CD14-positive monocyte (primary cell): ENCODE measurements at regions of chr11 and their contacts with region 1.

Region 1: DNA sequence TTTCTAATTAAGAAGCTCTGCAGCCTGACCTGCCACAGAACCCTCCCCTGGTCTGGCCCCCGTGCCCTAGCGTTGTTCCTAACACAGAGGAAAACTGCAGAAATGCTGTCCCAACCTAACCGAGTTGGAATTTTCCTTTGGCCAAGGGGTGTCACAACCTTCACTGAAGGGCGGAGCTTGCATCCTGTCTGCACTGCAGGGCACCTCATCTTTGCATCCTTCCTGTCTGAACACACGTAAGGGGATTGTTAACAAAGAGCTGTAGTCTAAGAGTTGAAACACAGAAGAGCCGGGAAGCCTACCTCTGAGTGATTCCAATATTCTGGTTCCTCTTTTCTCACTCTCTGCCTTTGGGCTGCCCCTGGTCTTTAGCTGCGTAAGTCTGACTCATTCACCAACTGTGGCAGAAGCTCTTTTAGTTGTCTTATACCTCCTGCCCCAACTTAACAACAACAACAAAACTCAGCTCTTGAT is 1.6 kb downstream of the DIXDC1 start:
- DNase-seq: peak; percentile 74 to 91 (median 89)
- H3K4me3 ChIP-seq: peak overlapping the region in 1 of 3 experiments; percentile 88
- H3K4me3 Mint-ChIP-seq: peak overlapping the region; percentile 35 to 84
- H3K27ac ChIP-seq: peak overlapping the region in 1 of 2 donors; percentile 70
- H3K27ac Mint-ChIP-seq: peak overlapping the region; percentile 46 to 91 (median 70)
- H3K4me1 ChIP-seq: peaks cover 49 to 55% of the 10 kb centered on the region in 2 donors
- H3K4me1 Mint-ChIP-seq: peaks cover 49% of the 10 kb centered on the region
- H3K27me3 ChIP-seq: no peaks in the 10 kb centered on the region
- H3K27me3 Mint-ChIP-seq: peaks cover 0 to 4% (median 2%) of the 10 kb centered on the region in 3 donors
- CTCF ChIP-seq: no peak

Region 2: DNA sequence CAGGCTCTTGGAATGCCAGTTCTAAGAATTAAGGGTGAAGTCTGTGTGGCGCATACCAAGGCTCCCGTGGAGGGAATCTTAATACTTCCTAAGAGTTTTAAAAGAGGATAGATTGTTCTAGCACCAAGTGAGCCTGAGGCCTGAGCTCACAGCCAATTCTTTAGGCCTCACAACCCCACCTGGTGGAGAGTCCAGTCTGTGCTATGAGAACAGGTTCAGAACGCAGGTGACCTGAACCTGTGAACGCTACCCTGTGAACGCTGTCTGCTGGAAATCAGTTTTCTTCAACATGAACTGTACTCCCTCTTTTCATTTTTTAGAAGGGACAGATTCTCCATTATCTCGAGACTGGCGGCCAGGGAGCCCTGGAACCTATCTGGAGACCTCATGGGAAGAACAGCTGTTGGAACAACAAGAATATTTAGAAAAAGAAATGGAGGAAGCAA is 43.3 kb after region 1 on chr11:
- intact Hi-C with region 1: loop called in 1 of 2 experiments (anchors 5 kb)
- DNase-seq: peak in 1 of 3 donors; percentile 22
- H3K4me3 ChIP-seq: no peak overlapping the region
- H3K4me3 Mint-ChIP-seq: no peak overlapping the region
- H3K27ac ChIP-seq: no peak overlapping the region
- H3K27ac Mint-ChIP-seq: no peak overlapping the region
- H3K4me1 ChIP-seq: peaks cover 6 to 10% of the 10 kb centered on the region in 2 donors
- H3K4me1 Mint-ChIP-seq: peaks cover 10% of the 10 kb centered on the region
- H3K27me3 ChIP-seq: peaks cover 13 to 20% of the 10 kb centered on the region in 2 donors
- H3K27me3 Mint-ChIP-seq: peaks cover 21 to 27% (median 22%) of the 10 kb centered on the region in 3 donors
- CTCF ChIP-seq: peak; percentile 67

Region 3: GRCh38 chr11:112004389-112004788 is 65.7 kb after region 1 on chr11:
- intact Hi-C with region 1: no loop called
- DNase-seq: peak in 1 of 3 donors; percentile 18
- H3K4me3 ChIP-seq: no peak overlapping the region
- H3K4me3 Mint-ChIP-seq: no peak overlapping the region
- H3K27ac ChIP-seq: no peak overlapping the region
- H3K27ac Mint-ChIP-seq: peak overlapping the region in 1 of 7 donors; percentile 46
- H3K4me1 ChIP-seq: no peaks in the 10 kb centered on the region
- H3K4me1 Mint-ChIP-seq: no peaks in the 10 kb centered on the region
- H3K27me3 ChIP-seq: no peaks in the 10 kb centered on the region
- H3K27me3 Mint-ChIP-seq: peaks cover 0 to 2% (median 0%) of the 10 kb centered on the region in 3 donors
- CTCF ChIP-seq: peak; percentile 58

Region 4: DNA sequence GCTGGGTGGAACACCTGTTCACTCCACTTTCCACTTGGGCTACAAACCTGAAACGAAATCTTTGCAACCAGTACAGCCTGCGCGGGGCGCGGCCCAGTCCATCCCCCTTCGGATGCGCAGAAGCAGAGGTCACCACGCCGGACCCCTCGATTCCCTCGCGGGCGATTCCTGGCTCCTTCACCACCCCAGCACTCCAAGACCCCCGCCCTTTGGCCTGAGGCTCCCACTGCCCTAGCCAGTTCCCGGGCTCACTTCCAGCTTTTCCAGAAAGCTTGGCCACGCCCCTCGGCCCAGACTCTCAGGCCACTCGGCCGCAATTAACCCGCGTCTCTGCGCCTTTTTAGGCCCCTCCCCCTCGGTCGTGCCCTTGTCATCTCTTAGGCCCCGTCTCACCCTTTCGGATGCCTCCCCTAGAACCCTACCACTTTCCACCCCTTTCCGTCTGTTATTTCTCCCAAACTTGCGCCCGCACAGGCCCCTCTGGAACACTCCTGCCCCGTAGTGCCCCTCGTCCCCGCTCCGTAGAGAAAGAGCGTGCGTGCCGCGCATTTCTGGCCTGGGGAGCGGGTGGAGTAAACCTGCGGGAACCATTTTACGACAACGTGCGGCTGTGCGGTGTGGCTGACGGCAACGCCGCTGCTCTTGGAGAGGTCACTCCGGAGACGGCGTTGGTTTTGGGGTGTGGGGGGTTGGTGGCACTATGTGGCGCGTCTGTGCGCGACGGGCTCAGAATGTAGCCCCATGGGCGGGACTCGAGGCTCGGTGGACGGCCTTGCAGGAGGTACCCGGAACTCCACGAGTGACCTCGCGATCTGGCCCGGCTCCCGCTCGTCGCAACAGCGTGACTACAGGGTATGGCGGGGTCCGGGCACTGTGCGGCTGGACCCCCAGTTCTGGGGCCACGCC is 86.3 kb after region 1 on chr11 and contains the start of gene DLAT:
- intact Hi-C with region 1: loop called in 1 of 2 experiments (anchors 10 kb)
- DNase-seq: peak; percentile 71 to 78 (median 71)
- H3K4me3 ChIP-seq: peak within 1 kb of the TSS; percentile 78 to 91 (median 85)
- H3K4me3 Mint-ChIP-seq: peak within 1 kb of the TSS; percentile 99 to 100
- H3K27ac ChIP-seq: peak within 1 kb of the TSS; percentile 67 to 85
- H3K27ac Mint-ChIP-seq: peak within 1 kb of the TSS; percentile 92 to 99 (median 95)
- H3K4me1 ChIP-seq: peaks cover 13 to 19% of the 10 kb centered on the region in 2 donors
- H3K4me1 Mint-ChIP-seq: peaks cover 18% of the 10 kb centered on the region
- H3K27me3 ChIP-seq: no peaks in the 10 kb centered on the region
- H3K27me3 Mint-ChIP-seq: no peaks in the 10 kb centered on the region
- CTCF ChIP-seq: no peak
- polyA plus RNA-seq, gene DLAT: 5.8 to 14.6 (median 11.5) TPM

Region 5: DNA sequence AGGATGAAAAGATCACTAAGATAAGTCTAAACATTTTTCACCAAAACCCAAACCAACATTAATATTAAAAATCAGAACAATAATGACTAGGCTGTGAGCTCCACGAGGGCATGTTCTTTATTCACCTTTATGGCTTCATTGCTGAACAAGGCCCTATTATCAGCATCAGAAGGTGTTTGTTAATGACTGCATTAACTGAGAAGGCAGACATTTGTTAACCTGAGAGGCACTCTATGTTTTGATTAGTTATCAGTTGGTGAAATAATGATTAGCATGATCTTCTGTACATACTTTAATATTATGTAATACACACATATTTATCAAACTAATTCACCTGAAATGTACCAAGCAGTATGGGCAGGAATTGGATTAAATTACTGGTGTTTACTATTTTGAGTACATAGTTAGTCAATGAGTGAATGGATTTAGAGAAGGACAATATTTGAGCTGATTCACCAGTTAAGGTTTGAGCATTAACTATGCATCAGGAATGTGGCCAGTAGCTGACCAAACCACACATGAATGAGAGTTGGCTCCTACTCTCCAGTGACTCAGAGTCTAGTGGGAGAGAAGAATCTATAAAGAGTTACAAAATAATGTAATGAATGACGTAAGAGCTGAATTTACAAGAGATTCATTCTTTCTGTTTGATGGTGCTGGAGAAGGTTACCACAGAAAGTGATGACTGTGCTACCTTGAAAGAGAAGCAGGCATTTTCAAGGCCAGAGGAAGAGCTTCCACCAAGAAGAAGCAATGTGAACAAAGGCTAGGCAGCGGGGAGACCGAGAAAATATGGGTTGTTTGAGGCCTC is 218.4 kb after region 1 on chr11:
- intact Hi-C with region 1: loop called in 1 of 2 experiments (anchors 10 kb)
- DNase-seq: peak; percentile 83 to 96 (median 95)
- H3K4me3 ChIP-seq: no peak overlapping the region
- H3K4me3 Mint-ChIP-seq: no peak overlapping the region
- H3K27ac ChIP-seq: peak overlapping the region; percentile 22 to 65
- H3K27ac Mint-ChIP-seq: peak overlapping the region; percentile 55 to 96 (median 88)
- H3K4me1 ChIP-seq: peaks cover 41 to 52% of the 10 kb centered on the region in 2 donors
- H3K4me1 Mint-ChIP-seq: peaks cover 48% of the 10 kb centered on the region
- H3K27me3 ChIP-seq: no peaks in the 10 kb centered on the region
- H3K27me3 Mint-ChIP-seq: peaks cover 0 to 1% (median 1%) of the 10 kb centered on the region in 3 donors
- CTCF ChIP-seq: no peak

Region 6: GRCh38 chr11:112195906-112196305 is 257.2 kb after region 1 on chr11:
- intact Hi-C with region 1: no loop called
- DNase-seq: no peak
- H3K4me3 ChIP-seq: no peak overlapping the region
- H3K4me3 Mint-ChIP-seq: no peak overlapping the region
- H3K27ac ChIP-seq: peak overlapping the region in 1 of 2 donors; percentile 28
- H3K27ac Mint-ChIP-seq: no peak overlapping the region
- H3K4me1 ChIP-seq: peaks cover 25 to 44% of the 10 kb centered on the region in 2 donors
- H3K4me1 Mint-ChIP-seq: peaks cover 33% of the 10 kb centered on the region
- H3K27me3 ChIP-seq: no peaks in the 10 kb centered on the region
- H3K27me3 Mint-ChIP-seq: no peaks in the 10 kb centered on the region
- CTCF ChIP-seq: no peak